ENCODE measurements at regions of chr9 and their contacts with region 1.

Region 1: DNA sequence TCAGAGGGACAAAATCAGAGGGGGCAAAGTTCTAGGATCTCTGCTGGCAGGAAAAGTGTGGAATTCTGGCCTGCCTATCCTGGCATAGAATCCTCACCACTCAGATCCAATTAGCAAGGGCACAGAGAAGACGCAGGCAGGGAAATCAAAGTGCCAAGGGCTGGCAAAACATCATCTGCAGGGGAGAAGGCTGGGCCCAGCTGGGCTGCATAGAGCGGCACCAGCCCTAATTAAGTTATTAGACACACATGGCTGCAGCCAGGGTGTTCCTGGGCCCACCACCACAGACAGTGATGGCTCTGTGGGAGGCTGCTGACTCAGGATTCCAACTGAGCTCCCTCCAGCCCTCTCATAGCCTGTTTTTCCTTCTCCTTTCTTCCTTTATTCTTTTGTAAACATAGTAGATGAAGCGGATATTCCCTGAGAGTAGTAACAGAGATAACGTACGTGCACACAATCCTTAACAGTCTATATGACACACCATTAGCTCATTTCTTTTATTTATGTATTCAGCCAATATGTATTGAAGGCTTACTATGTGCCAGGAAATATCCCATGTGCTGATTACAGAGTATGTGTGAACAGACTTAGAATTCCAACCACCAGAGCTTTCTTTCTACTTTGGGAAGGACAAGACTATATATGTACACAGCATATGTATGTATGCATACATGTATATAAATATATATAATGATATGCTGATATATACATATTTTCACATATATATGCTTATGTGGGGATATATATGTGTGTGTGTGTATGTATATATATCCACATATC is 236.1 kb downstream of the ASTN2 start:
- DNase-seq: no peak
- ATAC-seq: no peak
- H3K4me3 ChIP-seq: no peak overlapping the region
- H3K27ac ChIP-seq: no peak overlapping the region
- H3K4me1 ChIP-seq: no peaks in the 10 kb centered on the region
- H3K27me3 ChIP-seq: no peaks in the 10 kb centered on the region
- CTCF ChIP-seq: no peak
- POLR2A ChIP-seq: no peak

Region 2: GRCh38 chr9:117290856-117291622 is 112.3 kb after region 1 on chr9:
- in situ Hi-C with region 1: loop called in 1 of 4 experiments (anchors 25 kb)
- intact Hi-C with region 1: no loop called
- DNase-seq: no peak
- ATAC-seq: no peak
- H3K4me3 ChIP-seq: no peak overlapping the region
- H3K27ac ChIP-seq: no peak overlapping the region
- H3K4me1 ChIP-seq: no peaks in the 10 kb centered on the region
- H3K27me3 ChIP-seq: no peaks in the 10 kb centered on the region
- CTCF ChIP-seq: no peak
- POLR2A ChIP-seq: no peak

Measured in gastrocnemius medialis (tissue), 4 donors.